Heart right ventricle (tissue), 16 donors: ENCODE measurements at regions of chr3 and their contacts with region 1.

Region 1: GRCh38 chr3:59450946-59451763 is 401.3 kb upstream of the CFAP20DC start:
- DNase-seq: peak in 1 of 2 donors; percentile 12
- ATAC-seq: peak in 6 of 8 donors; percentile 38 to 70 (median 57)
- H3K4me3 ChIP-seq: no peak overlapping the region
- H3K27ac ChIP-seq: peak overlapping the region in 1 of 10 donors; percentile 52
- H3K4me1 ChIP-seq: peaks cover 0 to 9% (median 0%) of the 10 kb centered on the region in 9 donors
- H3K27me3 ChIP-seq: no peaks in the 10 kb centered on the region
- CTCF ChIP-seq: no peak

Region 2: DNA sequence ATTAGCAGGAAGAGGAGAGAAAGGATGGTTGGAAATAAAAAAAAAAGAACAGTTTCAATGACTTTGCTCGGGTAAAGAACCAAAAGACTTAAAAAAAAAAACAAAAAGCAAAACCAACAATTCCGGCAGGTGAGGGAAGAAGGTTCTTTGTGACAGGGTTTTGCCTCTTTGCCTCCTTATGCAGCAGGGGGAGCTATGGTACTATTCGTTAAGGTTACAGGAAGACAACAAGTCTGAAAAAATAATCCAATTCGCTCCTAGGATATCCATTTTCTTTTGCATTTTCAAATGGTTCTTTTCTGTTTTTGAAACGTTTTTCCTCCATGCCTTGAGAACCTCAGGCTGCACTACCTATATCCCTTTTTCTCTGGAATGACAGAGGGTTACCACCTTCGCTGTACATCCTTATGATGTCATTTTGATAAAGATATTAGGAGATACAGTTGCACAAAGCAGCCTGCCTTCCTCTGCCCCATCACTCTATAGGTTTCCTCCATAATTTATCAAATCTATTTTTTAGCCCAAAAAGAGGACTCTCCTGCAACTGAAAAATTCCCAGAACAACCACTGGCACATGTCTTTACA is 456.3 kb before region 1 on chr3:
- intact Hi-C with region 1: loop called in 1 of 10 experiments (anchors 5 kb)
- DNase-seq: peak in 1 of 2 donors; percentile 42
- ATAC-seq: no peak
- H3K4me3 ChIP-seq: no peak overlapping the region
- H3K27ac ChIP-seq: no peak overlapping the region
- H3K4me1 ChIP-seq: no peaks in the 10 kb centered on the region
- H3K27me3 ChIP-seq: no peaks in the 10 kb centered on the region
- CTCF ChIP-seq: peak in 8 of 9 donors; percentile 29 to 72 (median 64)